BJ (cell line): ENCODE measurements at regions of chr11 and their contacts with region 1.

Region 1: GRCh38 chr11:128157423-128158298 is 429.7 kb downstream of the ETS1 start:
- DNase-seq: peak; percentile 21
- H3K4me3 ChIP-seq: no peak overlapping the region
- H3K27me3 ChIP-seq: peaks cover 2% of the 10 kb centered on the region; the same call in 1 of the 2 replicates
- CTCF ChIP-seq: peak; percentile 80

Region 2: GRCh38 chr11:128039140-128040021 is 118.3 kb before region 1 on chr11:
- CTCF ChIA-PET with region 1: interaction called, 50 read pairs
- POLR2A ChIA-PET with region 1: no interaction called
- DNase-seq: peak; percentile 84
- H3K4me3 ChIP-seq: no peak overlapping the region
- H3K27me3 ChIP-seq: no peaks in the 10 kb centered on the region
- CTCF ChIP-seq: 0 out of 2 replicates have a peak, but pooled peaks have one; percentile 21

Region 3: DNA sequence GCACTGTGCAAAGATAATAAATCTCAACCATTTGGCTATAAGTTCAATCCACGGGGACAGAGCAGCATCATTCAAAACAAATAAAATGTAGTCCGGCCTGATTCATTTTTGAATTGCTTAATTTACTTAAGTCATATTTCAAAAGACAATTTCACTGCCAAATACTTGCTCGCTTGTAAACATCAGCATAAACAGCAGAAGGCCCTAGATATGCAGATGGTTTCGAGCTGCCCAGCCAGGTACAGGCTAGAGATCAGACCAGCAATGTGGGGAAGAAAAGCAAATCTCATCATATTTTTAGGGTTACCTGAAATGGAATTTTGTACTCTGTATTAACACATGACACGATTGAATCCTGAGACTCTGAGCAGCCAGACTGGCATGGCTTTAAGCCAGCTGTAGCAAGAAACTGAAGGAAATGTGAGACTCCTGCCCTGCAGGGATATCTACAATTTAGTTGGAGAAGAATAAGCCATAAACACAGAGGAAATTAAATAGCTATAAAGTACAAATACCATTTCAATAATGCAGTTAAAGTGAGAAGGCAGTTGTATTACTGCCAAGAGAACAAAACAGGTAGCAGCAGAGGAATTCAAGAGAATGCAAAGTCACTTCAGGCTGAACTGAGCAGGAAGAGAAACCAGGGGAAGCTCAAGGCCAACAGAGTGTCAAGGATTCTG is 10.6 kb before region 1 on chr11:
- CTCF ChIA-PET with region 1: interaction called, 35 read pairs
- POLR2A ChIA-PET with region 1: no interaction called
- DNase-seq: no peak
- H3K4me3 ChIP-seq: no peak overlapping the region
- H3K27me3 ChIP-seq: peaks cover 14% of the 10 kb centered on the region
- CTCF ChIP-seq: no peak

Region 4: GRCh38 chr11:128831174-128832120 is 673.8 kb after region 1 on chr11:
- CTCF ChIA-PET with region 1: interaction called, 58 read pairs
- POLR2A ChIA-PET with region 1: no interaction called
- DNase-seq: no peak
- H3K4me3 ChIP-seq: no peak overlapping the region
- H3K27me3 ChIP-seq: no peaks in the 10 kb centered on the region; the same call in 1 of the 2 replicates
- CTCF ChIP-seq: peak; percentile 84

Region 5: GRCh38 chr11:128965485-128965884 is 807.8 kb after region 1 on chr11:
- CTCF ChIA-PET with region 1: interaction called, 10 read pairs
- POLR2A ChIA-PET with region 1: no interaction called
- DNase-seq: no peak
- H3K4me3 ChIP-seq: no peak overlapping the region
- H3K27me3 ChIP-seq: no peaks in the 10 kb centered on the region
- CTCF ChIP-seq: no peak